ENCODE measurements at regions of chrX and their contacts with region 1.

Region 1: DNA sequence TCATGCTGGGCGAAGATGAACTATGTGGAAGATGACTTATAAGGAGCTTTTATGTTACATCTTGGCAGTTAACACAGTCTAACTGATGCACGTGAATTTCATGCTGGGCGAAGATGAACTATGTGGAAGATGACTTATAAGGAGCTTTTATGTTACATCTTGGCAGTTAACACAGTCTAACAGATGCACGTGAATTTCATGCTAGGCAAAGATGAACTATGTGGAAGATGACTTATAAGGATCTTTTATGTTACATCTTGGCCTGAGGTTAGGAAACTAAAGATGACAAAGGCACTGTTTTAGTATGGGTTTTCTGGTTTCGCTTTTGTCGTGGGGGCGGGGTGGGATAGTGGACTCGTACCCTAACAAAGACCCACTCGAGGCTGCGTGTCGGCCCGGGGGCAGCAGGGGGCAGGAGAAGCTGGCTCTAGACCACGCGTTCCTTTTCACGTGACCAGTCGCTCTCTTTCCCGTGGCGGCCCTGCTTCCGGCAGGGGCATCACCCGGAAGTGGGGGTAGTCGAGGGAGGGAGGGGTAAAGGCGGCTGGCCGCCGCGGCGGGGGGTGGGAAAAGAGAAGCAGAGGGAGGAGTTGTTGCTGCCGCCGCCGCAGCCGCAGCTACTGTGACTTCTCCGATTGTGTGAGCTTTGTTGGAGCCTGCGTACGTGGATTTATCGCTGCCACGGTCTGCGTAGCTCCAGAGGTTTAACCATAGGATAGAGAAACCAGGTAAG is at the start of gene ATP7A:
- H3K4me3 Mint-ChIP-seq: peak within 1 kb of the TSS; percentile 92
- H3K27ac Mint-ChIP-seq: peak within 1 kb of the TSS; percentile 93
- H3K4me1 Mint-ChIP-seq: peaks cover 6% of the 10 kb centered on the region
- H3K27me3 Mint-ChIP-seq: no peaks in the 10 kb centered on the region

Region 2: DNA sequence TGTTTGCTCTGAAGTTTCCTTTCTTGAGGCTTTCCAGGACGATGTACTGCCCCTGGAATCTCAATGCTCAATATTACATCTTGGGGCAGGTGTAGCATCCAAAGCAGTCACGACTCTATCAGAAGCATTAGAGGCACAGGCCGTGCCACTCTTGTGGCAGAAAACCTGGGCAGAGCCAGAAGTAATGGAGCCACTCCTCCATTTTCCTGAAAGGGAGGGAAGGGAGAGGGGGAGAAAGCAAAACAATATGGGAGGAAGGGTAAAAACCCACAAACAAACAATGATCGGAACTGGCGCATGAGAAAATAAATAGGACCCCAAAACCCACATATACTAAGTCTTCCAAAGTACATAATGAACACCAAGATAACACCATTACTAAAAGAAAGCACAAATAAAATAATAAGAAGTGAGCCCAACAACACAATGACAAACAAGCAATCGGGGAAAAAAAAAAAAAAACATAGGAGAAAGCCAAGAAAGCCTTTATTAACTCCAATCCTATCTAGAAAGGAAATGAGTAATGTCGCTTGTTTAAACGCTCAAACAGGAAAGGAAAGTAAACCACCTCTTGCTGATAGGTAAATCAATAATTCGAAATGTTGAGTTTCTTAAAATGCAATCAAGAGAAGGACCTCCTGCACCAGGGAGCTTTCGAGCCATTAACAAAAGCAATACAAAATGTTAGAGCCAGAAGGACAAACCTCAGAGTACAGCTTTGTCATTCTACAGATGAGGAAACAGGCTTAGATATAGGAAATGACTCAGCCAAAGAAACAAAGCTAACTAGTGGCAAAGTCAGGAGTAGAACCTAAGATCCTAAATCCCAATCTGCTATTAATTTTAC is 241.7 kb before region 1 on chrX:
- intact Hi-C with region 1: no loop called
- H3K4me3 Mint-ChIP-seq: no peak overlapping the region
- H3K27ac Mint-ChIP-seq: peak overlapping the region; percentile 43
- H3K4me1 Mint-ChIP-seq: no peaks in the 10 kb centered on the region
- H3K27me3 Mint-ChIP-seq: no peaks in the 10 kb centered on the region

Region 3: DNA sequence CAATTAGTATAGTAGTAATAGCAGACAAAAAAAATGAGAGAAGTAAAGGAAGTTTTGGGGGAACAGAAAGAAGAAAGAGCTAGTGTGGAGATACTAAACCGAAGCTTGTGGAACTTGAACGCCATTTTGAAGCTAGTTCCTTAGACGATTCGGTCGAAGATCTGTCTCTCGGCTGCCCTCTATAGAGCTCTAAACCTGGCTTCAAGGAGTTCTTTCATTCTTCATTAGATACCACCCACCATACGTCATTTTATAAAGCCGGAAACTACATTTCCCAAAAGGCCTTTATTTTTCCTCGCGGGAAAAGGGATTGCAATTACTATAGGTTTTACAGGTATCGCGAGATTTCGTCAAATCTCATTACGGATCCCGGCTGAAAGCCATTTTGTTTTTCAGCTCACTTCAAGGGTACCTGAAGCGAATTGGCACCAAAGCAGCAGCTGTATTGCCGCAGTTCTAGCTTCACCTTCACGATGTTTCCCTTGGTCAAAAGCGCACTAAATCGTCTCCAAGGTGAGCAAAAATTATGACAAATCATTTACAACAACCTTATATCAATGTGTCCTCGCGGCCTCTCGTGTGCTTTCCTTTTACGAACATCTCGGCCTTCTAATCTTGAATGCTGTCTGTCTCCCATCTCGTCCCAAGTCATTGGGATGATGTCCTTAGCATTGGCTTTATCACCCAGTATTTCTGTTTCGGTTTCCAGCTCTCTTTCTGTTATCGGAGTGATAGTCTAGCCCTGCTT is 11.0 kb before region 1 on chrX and contains the start of gene COX7B:
- intact Hi-C with region 1: loop called (anchors 1 kb)
- H3K4me3 Mint-ChIP-seq: peak within 1 kb of the TSS; percentile 83
- H3K27ac Mint-ChIP-seq: peak within 1 kb of the TSS; percentile 94
- H3K4me1 Mint-ChIP-seq: peaks cover 8% of the 10 kb centered on the region
- H3K27me3 Mint-ChIP-seq: no peaks in the 10 kb centered on the region

Region 4: GRCh38 chrX:78024349-78025108 is 114.3 kb after region 1 on chrX:
- intact Hi-C with region 1: loop called (anchors 2 kb)
- H3K4me3 Mint-ChIP-seq: peak overlapping the region; percentile 32
- H3K27ac Mint-ChIP-seq: peak overlapping the region; percentile 63
- H3K4me1 Mint-ChIP-seq: no peaks in the 10 kb centered on the region
- H3K27me3 Mint-ChIP-seq: no peaks in the 10 kb centered on the region

Region 5: GRCh38 chrX:78103623-78104446 is 193.6 kb after region 1 on chrX and contains the start of gene PGK1:
- intact Hi-C with region 1: loop called (anchors 5 kb)
- H3K4me3 Mint-ChIP-seq: peak within 1 kb of the TSS; percentile 91
- H3K27ac Mint-ChIP-seq: peak within 1 kb of the TSS; percentile 94
- H3K4me1 Mint-ChIP-seq: peaks cover 29% of the 10 kb centered on the region
- H3K27me3 Mint-ChIP-seq: no peaks in the 10 kb centered on the region